GM12878 (cell line): ENCODE measurements at regions of chr15 and their contacts with region 1.

Region 1: DNA sequence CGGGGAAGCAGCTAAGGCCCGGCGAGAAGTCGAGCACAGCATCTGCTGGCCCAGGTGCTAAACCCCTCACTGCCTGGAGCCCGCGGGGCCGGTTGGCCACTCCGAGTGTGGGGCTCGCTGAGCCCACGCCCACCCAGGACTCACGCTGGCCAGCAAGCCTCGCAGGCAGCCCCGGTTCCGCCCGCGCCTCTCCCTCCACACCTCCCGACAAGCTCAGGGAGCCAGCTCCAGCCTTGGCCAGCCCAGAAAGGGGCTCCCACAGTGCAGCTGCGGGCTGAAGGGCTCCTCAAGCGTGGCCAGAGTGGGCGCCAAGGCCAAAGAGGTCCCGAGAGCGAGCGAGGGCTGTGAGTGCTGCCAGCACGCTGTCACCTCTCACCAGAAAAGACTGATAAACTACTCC is 8.9 kb upstream of the GABRB3 start:
- DNase-seq: no peak
- ATAC-seq: no peak
- H3K4me3 ChIP-seq: no peak overlapping the region
- H3K27ac ChIP-seq: no peak overlapping the region
- H3K4me1 ChIP-seq: no peaks in the 10 kb centered on the region
- H3K27me3 ChIP-seq: no peaks in the 10 kb centered on the region
- CTCF ChIP-seq: no peak
- EP300 ChIP-seq: no peak
- POLR2A ChIP-seq: no peak
- RAD21 ChIP-seq: no peak

Region 2: DNA sequence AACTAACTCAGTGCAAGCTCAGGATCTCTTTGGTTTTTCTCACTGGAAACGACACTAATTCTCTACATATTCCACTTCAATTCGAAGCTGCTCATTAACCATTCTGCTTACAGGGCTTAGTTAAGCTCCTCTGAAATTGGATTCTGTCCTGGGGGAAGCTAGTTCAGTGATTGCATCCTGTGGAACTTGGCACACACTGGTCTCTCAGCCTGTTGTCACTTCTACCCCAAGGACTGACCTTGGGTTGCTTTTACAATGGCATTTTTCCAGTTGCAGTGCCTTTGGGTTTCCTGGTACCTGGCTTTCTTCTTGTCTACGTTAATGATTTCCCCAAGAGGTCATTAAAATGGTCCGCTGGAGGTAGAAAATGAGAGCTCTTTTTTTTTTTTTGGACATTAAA is 24.3 kb after region 1 on chr15:
- CTCF ChIA-PET with region 1: no interaction called
- POLR2A ChIA-PET with region 1: no interaction called
- RAD21 ChIA-PET with region 1: no interaction called
- SMC1A ChIA-PET with region 1: no interaction called
- in situ Hi-C with region 1: no loop called
- intact Hi-C with region 1: no loop called
- DNase-seq: no peak
- ATAC-seq: no peak
- H3K4me3 ChIP-seq: no peak overlapping the region
- H3K27ac ChIP-seq: no peak overlapping the region
- H3K4me1 ChIP-seq: no peaks in the 10 kb centered on the region
- H3K27me3 ChIP-seq: no peaks in the 10 kb centered on the region
- CTCF ChIP-seq: no peak
- EP300 ChIP-seq: no peak
- POLR2A ChIP-seq: no peak
- RAD21 ChIP-seq: no peak

Region 3: DNA sequence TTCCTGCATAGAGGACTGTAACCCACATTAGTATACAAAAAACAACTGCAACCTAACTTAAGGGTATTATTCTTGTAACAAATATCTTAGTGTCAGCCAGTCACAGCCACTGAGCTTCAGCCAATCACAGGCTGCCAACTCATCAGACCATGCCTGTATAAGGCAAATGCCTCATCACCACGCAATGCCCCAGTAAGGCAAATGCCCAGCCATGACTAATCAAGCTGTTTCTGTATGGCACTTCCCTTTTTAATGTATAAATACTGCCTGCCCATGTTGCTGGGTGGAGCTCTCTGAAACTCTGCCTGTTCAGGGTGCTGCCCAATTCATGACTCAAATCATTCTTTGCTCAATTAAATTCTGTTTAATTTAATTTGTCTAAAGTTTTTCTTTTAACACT is 66.7 kb after region 1 on chr15:
- CTCF ChIA-PET with region 1: no interaction called
- POLR2A ChIA-PET with region 1: no interaction called
- RAD21 ChIA-PET with region 1: no interaction called
- SMC1A ChIA-PET with region 1: no interaction called
- in situ Hi-C with region 1: loop called (anchors 10 kb)
- intact Hi-C with region 1: no loop called
- DNase-seq: no peak
- ATAC-seq: no peak
- H3K4me3 ChIP-seq: no peak overlapping the region
- H3K27ac ChIP-seq: no peak overlapping the region
- H3K4me1 ChIP-seq: no peaks in the 10 kb centered on the region
- H3K27me3 ChIP-seq: no peaks in the 10 kb centered on the region
- CTCF ChIP-seq: no peak
- EP300 ChIP-seq: no peak
- POLR2A ChIP-seq: no peak
- RAD21 ChIP-seq: no peak